Activated CD4-positive, alpha-beta memory T cell treated with anti-CD3 and anti-CD28 coated beads, Interleukin-2, amount 10 ng/mL, durations not matched to agents 7 days and 5 days (primary cell): ENCODE measurements at regions of chr4 and their contacts with region 1.

Region 1: GRCh38 chr4:80017125-80017854 is 55.7 kb downstream of the ANTXR2 start:
- DNase-seq: no peak
- H3K4me3 Mint-ChIP-seq: no peak overlapping the region
- H3K27ac Mint-ChIP-seq: no peak overlapping the region
- H3K4me1 Mint-ChIP-seq: peaks cover 26% of the 10 kb centered on the region
- H3K27me3 Mint-ChIP-seq: no peaks in the 10 kb centered on the region

Region 2: GRCh38 chr4:80035336-80035735 is 18.0 kb after region 1 on chr4:
- CTCF ChIA-PET with region 1: no interaction called
- POLR2A ChIA-PET with region 1: interaction called, 19 read pairs
- DNase-seq: peak; percentile 47
- H3K4me3 Mint-ChIP-seq: no peak overlapping the region
- H3K27ac Mint-ChIP-seq: peak overlapping the region; percentile 72
- H3K4me1 Mint-ChIP-seq: peaks cover 66% of the 10 kb centered on the region
- H3K27me3 Mint-ChIP-seq: no peaks in the 10 kb centered on the region